BJ (cell line): ENCODE measurements at regions of chr3 and their contacts with region 1.

Region 1: GRCh38 chr3:128438488-128439072 is 28.1 kb downstream of the DNAJB8 start:
- DNase-seq: no peak
- H3K4me3 ChIP-seq: no peak overlapping the region
- H3K27me3 ChIP-seq: peaks cover 4% of the 10 kb centered on the region
- CTCF ChIP-seq: peak; percentile 33

Region 2: DNA sequence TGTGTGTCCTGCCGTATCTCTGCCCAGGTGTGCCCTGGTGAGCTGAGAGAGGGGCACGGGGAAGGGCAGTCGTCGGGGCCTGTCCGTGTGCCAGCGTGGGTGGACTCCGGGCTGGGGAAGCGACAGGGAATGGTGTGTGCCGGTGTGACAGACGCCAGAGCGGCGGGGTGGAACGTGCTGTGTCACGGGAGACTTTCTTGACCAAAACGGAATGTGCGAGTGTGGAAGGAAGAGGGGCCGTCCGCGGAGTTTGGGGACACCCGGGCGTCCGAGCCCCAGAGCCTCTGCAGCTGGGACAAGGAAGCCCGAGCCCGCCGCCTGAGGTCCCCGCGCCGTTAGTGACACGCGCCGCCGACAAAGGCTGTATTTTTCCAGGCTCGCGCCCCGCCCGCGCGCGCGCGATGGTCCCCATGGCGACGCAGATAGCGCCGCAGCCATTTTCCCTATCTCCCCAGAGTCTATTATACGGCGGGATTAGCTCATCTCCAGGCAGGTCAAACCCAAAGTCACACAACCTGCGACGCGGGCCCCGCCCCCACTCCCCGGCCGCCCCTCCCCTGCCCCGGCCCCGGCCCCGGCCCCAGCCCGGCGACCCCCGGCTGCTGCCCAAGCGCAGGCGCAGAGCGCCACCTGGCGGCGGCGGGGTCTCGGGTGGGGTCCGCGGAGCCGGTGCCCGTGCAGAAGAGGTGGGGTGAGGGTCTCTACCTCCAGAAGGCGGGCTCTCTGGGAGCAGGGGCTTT is 59.0 kb after region 1 on chr3:
- CTCF ChIA-PET with region 1: interaction called, 12 read pairs
- POLR2A ChIA-PET with region 1: no interaction called
- DNase-seq: no peak
- H3K4me3 ChIP-seq: peak overlapping the region; percentile 47
- H3K27me3 ChIP-seq: no peaks in the 10 kb centered on the region; the same call in 1 of the 2 replicates
- CTCF ChIP-seq: peak; percentile 68